Natural killer cell (primary cell): ENCODE measurements at regions of chr9 and their contacts with region 1.

Region 1: DNA sequence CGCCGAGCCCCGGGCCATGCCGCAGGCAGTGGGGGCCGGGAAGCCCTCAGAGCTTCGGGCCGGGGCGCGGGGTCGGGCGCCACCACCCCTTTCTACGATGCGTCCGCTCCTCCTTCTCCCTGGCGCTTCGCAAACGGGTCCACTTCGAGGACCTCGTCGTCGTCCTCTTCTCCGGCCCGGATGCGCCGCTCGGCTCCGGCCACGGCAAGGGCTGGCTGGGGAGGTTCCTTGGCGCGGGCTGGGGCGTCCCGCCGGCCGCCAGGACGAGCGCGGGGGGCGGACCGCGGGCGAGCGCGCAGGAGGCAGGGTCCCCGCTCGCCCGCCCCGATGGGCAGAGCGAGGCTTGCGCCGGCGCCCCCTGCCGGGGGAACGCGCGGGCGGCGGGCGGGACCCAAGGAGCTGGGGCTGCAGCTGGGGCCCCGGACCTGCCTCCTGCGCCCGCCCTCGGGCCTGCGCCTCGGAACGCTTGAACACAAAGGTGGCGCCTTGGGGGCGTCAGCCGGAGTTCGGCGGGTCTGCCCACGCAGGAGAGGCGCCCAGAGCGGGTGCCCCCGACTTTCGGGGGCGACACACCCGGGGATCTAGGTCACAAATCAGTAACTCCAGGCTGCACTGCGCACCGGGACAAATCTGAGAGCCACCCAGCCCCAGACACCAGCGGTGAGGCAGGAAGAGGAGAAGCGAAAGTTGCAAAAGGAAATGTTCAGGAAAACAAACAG is at the start of gene ROR2:
- DNase-seq: peak; percentile 46 to 58
- ATAC-seq: peak; percentile 65 to 88 (median 69)
- H3K4me3 ChIP-seq: no peak within 1 kb of the TSS
- H3K4me3 Mint-ChIP-seq: peak within 1 kb of the TSS; percentile 53
- H3K27ac ChIP-seq: no peak within 1 kb of the TSS
- H3K27ac Mint-ChIP-seq: no peak within 1 kb of the TSS
- H3K4me1 ChIP-seq: peaks cover 11% of the 10 kb centered on the region
- H3K4me1 Mint-ChIP-seq: peaks cover 0 to 11% of the 10 kb centered on the region in 2 donors
- H3K27me3 ChIP-seq: peaks cover 34% of the 10 kb centered on the region
- H3K27me3 Mint-ChIP-seq: peaks cover 52 to 65% of the 10 kb centered on the region in 2 donors
- CTCF ChIP-seq: peak; percentile 31
- total RNA-seq, gene ROR2: 1.7 TPM in 1 of 3 donors, not detected in the others

Region 2: DNA sequence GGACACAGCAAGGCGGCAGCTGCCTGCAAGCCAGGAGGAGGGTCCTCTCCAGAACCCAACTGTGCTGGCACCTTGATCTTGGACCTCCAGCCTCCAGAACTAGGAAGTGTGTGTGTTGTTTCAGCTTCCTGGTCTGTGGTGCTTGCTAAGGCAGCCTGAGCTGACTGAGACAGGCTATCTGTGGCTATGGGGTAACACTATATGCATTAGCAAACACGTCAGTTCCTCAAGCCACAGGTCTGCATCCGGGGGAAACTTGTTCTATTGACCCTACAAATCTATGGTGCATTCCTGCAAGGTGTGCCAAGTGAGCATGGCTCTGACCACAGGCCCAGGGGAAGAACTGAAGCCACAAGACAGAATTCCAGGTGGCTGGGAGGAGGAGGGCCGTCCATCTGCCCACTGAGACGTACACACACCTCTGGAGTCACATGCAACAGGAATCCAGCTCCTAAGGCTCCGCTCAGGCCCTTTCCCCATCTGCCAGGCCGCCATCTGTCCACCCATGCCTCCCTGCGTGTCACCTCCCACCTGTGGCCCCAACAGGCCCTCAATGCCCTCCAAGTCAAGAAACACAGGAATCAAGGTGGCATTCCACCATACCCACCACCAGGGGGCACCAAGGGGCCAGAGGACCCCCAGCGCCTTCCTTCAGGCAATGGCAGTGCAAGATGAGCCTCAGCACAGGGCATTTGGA is 174.9 kb before region 1 on chr9:
- intact Hi-C with region 1: loop called (anchors 1 kb)
- DNase-seq: peak; percentile 60 to 75
- ATAC-seq: peak; percentile 67 to 85 (median 72)
- H3K4me3 ChIP-seq: no peak overlapping the region
- H3K4me3 Mint-ChIP-seq: no peak overlapping the region
- H3K27ac ChIP-seq: no peak overlapping the region
- H3K27ac Mint-ChIP-seq: no peak overlapping the region
- H3K4me1 ChIP-seq: no peaks in the 10 kb centered on the region
- H3K4me1 Mint-ChIP-seq: no peaks in the 10 kb centered on the region
- H3K27me3 ChIP-seq: no peaks in the 10 kb centered on the region
- H3K27me3 Mint-ChIP-seq: peaks cover 14 to 17% of the 10 kb centered on the region in 2 donors
- CTCF ChIP-seq: peak; percentile 79

Region 3: GRCh38 chr9:92224177-92224576 is 274.1 kb after region 1 on chr9:
- intact Hi-C with region 1: no loop called
- DNase-seq: no peak
- ATAC-seq: no peak
- H3K4me3 ChIP-seq: no peak overlapping the region
- H3K4me3 Mint-ChIP-seq: no peak overlapping the region
- H3K27ac ChIP-seq: no peak overlapping the region
- H3K27ac Mint-ChIP-seq: no peak overlapping the region
- H3K4me1 ChIP-seq: no peaks in the 10 kb centered on the region
- H3K4me1 Mint-ChIP-seq: no peaks in the 10 kb centered on the region
- H3K27me3 ChIP-seq: no peaks in the 10 kb centered on the region
- H3K27me3 Mint-ChIP-seq: no peaks in the 10 kb centered on the region
- CTCF ChIP-seq: no peak